Motor neuron (in vitro differentiated cells): ENCODE measurements at regions of chr2 and their contacts with region 1.

Region 1: DNA sequence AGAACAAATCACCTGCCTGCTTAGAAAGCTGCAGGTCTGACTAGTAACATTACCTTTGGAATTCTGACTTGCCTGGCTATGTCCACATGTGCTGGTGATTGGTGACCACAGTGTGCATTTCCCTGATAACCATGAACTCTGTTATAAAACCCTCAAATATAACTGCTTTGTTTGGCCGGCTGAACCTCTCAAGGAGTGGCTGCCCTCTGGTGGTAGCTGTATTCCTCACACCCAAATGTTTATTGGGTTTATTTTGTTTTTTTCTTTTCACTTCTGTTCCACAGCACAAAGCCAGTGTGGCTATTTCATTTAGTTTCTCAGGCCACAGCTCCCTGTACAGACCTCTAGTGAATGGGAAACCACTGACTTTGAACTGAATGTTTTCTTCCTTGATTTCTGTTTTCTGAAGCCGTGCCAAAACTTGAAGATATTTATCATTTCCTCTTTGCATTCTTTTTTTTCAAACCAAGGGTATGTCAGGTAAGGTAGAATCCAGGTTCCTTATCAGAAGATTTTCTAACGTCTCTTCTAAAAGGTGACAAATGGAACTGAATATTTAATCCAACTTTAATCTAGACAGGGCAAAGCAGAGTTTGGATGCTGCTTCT is 549.0 kb upstream of the VRK2 start:
- ATAC-seq: peak; percentile 52 to 70 (median 60)
- H3K4me3 ChIP-seq: no peak overlapping the region
- H3K27ac ChIP-seq: no peak overlapping the region
- H3K4me1 ChIP-seq: peaks cover 0 to 3% of the 10 kb centered on the region in 2 donors

Region 2: GRCh38 chr2:57376985-57377384 is 120.6 kb before region 1 on chr2:
- in situ Hi-C with region 1: loop called in 3 of 9 experiments (anchors 25 kb)
- ATAC-seq: peak in 3 of 8 experiments; percentile 68 to 75 (median 73)
- H3K4me3 ChIP-seq: no peak overlapping the region
- H3K27ac ChIP-seq: no peak overlapping the region
- H3K4me1 ChIP-seq: no peaks in the 10 kb centered on the region